ENCODE measurements at regions of chr1 and their contacts with region 1.

Region 1: GRCh38 chr1:175373786-175374623 is 181.4 kb upstream of the KIAA0040 start:
- DNase-seq: peak; percentile 13
- ATAC-seq: peak; percentile 87
- H3K4me3 ChIP-seq: no peak overlapping the region
- H3K27ac ChIP-seq: no peak overlapping the region
- H3K4me1 ChIP-seq: no peaks in the 10 kb centered on the region
- H3K27me3 ChIP-seq: peaks cover 49% of the 10 kb centered on the region; the same call in 1 of the 2 replicates
- CTCF ChIP-seq: peak; percentile 65 to 86 (median 85)
- POLR2A ChIP-seq: no peak
- RAD21 ChIP-seq: peak; percentile 81

Region 2: DNA sequence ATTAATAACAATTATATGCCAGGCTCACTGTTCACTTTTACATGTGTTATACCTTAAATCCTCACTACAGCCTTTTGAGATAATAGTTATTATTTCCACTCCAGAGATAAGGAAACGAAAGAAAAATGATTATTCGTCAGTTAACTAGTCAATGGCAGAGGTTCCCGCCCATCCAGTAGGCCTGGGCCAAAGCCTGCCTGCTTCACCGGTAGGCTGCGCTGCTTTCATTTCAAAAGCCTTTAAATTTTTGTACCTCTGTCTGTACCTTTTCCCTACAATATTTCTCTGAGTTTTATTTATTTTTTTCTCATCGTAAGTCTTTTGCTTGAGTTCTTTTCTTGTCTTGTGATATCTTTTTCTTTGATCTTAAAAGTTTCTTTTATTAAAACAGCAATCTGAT is 922.6 kb before region 1 on chr1:
- CTCF ChIA-PET with region 1: no interaction called
- POLR2A ChIA-PET with region 1: no interaction called
- RAD21 ChIA-PET with region 1: no interaction called
- intact Hi-C with region 1: no loop called
- DNase-seq: no peak
- ATAC-seq: no peak
- H3K4me3 ChIP-seq: no peak overlapping the region
- H3K27ac ChIP-seq: no peak overlapping the region
- H3K4me1 ChIP-seq: no peaks in the 10 kb centered on the region
- H3K27me3 ChIP-seq: no peaks in the 10 kb centered on the region
- CTCF ChIP-seq: no peak
- POLR2A ChIP-seq: no peak
- RAD21 ChIP-seq: no peak

Region 3: GRCh38 chr1:174841747-174842146 is 532.3 kb before region 1 on chr1:
- CTCF ChIA-PET with region 1: no interaction called
- POLR2A ChIA-PET with region 1: no interaction called
- RAD21 ChIA-PET with region 1: no interaction called
- intact Hi-C with region 1: no loop called
- DNase-seq: no peak
- ATAC-seq: no peak
- H3K4me3 ChIP-seq: no peak overlapping the region
- H3K27ac ChIP-seq: no peak overlapping the region
- H3K4me1 ChIP-seq: peaks cover 0 to 5% of the 10 kb centered on the region in 2 experiments; a peak in 1 of 4 replicates
- H3K27me3 ChIP-seq: no peaks in the 10 kb centered on the region
- CTCF ChIP-seq: no peak
- POLR2A ChIP-seq: no peak
- RAD21 ChIP-seq: no peak

Region 4: GRCh38 chr1:175434283-175434860 is 60.4 kb after region 1 on chr1:
- CTCF ChIA-PET with region 1: no interaction called
- POLR2A ChIA-PET with region 1: no interaction called
- RAD21 ChIA-PET with region 1: no interaction called
- intact Hi-C with region 1: loop called (anchors 2 kb)
- DNase-seq: no peak
- ATAC-seq: peak; percentile 81
- H3K4me3 ChIP-seq: no peak overlapping the region
- H3K27ac ChIP-seq: no peak overlapping the region
- H3K4me1 ChIP-seq: no peaks in the 10 kb centered on the region
- H3K27me3 ChIP-seq: peaks cover 24% of the 10 kb centered on the region; the same call in 1 of the 2 replicates
- CTCF ChIP-seq: peak; percentile 35 to 83 (median 78); a peak in 5 of 6 replicates
- POLR2A ChIP-seq: no peak
- RAD21 ChIP-seq: peak; percentile 57

Region 5: DNA sequence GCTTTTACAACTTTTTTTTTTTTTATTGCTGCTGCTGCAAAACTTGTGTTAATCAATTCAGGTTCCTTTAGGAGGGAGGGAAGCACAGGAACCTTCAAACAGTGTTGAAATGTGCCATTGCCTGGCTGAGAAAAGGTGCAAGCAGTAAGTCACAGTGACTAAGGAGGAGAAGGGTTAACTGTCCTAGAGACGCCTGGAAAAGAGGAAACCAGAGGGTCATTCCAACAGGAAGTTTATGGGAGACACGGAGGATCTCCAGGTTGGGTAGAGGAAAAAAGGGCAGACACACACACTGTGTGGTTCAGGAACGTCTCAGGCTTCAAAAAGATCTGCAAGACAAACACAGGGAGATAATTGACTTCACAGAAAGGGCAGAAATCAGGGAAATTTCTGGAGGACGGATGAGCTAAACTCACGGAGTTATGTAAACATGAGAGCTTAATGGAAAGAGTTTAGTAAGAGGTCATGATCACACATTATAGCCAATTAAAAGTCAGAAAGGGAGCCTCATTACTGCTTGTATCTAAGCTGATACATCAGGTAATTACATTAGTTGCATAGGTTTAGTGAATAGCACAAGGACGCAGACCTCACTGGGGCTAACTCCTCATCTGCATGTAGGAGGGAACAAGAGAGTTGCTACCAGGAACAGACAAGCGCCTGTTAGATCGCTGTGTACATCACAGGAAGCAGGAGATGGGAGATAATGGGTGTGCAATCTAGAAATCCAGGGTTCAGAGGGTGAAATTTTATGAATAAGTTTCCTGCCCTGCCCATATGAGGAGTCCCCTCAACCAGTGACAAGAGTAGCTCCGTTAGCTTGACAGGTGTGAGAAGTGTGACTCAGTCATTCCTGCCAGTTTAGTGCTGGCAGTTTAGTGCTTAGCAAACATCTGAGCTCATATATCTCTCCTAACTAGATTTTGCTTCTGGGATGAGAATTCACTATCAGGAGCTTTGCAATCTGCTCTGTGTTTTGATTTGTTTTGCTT is 466.0 kb after region 1 on chr1:
- CTCF ChIA-PET with region 1: no interaction called
- POLR2A ChIA-PET with region 1: no interaction called
- RAD21 ChIA-PET with region 1: no interaction called
- intact Hi-C with region 1: loop called (anchors 10 kb)
- DNase-seq: no peak
- ATAC-seq: no peak
- H3K4me3 ChIP-seq: no peak overlapping the region
- H3K27ac ChIP-seq: no peak overlapping the region
- H3K4me1 ChIP-seq: no peaks in the 10 kb centered on the region
- H3K27me3 ChIP-seq: peaks cover 52% of the 10 kb centered on the region
- CTCF ChIP-seq: no peak
- POLR2A ChIP-seq: no peak
- RAD21 ChIP-seq: no peak

Region 6: GRCh38 chr1:176073524-176074157 is 699.6 kb after region 1 on chr1:
- CTCF ChIA-PET with region 1: interaction called, 3 read pairs
- POLR2A ChIA-PET with region 1: no interaction called
- RAD21 ChIA-PET with region 1: no interaction called
- intact Hi-C with region 1: loop called (anchors 1 kb)
- DNase-seq: peak; percentile 52
- ATAC-seq: peak; percentile 85
- H3K4me3 ChIP-seq: no peak overlapping the region
- H3K27ac ChIP-seq: no peak overlapping the region
- H3K4me1 ChIP-seq: no peaks in the 10 kb centered on the region
- H3K27me3 ChIP-seq: no peaks in the 10 kb centered on the region
- CTCF ChIP-seq: peak; percentile 55 to 83 (median 57)
- POLR2A ChIP-seq: no peak
- RAD21 ChIP-seq: peak; percentile 73

Region 7: GRCh38 chr1:176843352-176844297 is 1469.6 kb after region 1 on chr1:
- CTCF ChIA-PET with region 1: no interaction called
- POLR2A ChIA-PET with region 1: no interaction called
- RAD21 ChIA-PET with region 1: no interaction called
- intact Hi-C with region 1: loop called (anchors 10 kb)
- DNase-seq: peak; percentile 7
- ATAC-seq: no peak
- H3K4me3 ChIP-seq: no peak overlapping the region
- H3K27ac ChIP-seq: no peak overlapping the region
- H3K4me1 ChIP-seq: no peaks in the 10 kb centered on the region
- H3K27me3 ChIP-seq: peaks cover 9% of the 10 kb centered on the region
- CTCF ChIP-seq: peak in 2 of 3 experiments; percentile 8 to 47; a peak in 3 of 6 replicates
- POLR2A ChIP-seq: no peak
- RAD21 ChIP-seq: peak; percentile 61